Heart left ventricle (tissue), 16 donors: ENCODE measurements at regions of chr7 and their contacts with region 1.

Region 1: DNA sequence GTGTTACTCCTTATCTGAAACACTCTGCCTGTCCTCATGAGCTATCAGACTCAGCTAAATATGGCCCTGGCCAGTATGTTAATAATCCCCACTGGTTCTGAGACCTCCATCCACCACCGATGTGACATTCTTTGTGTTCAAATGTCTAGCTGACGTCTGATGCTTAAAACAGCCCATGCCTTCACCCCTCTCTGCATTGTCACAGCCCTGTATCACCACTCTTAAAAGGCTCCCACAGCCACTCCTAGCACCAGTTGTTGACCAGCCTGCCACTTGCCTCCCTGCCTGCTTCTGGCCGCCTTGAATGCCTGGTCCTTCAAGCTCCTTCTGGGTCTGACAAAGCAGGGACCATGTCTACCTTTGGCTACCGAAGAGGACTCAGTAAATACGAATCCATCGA is at the start of gene LMOD2:
- DNase-seq: peak; percentile 69 to 85 (median 79)
- ATAC-seq: peak; percentile 80 to 91 (median 86)
- H3K4me3 ChIP-seq: peak within 1 kb of the TSS; percentile 36 to 69 (median 58)
- H3K27ac ChIP-seq: peak within 1 kb of the TSS; percentile 76 to 98 (median 89)
- H3K4me1 ChIP-seq: peaks cover 0 to 20% (median 2%) of the 10 kb centered on the region in 12 donors
- H3K27me3 ChIP-seq: no peaks in the 10 kb centered on the region
- CTCF ChIP-seq: no peak
- POLR2A ChIP-seq: peak in 1 of 2 donors; percentile 92
- total RNA-seq, gene LMOD2: 348 to 1,479 (median 780) TPM

Region 2: GRCh38 chr7:123601530-123601929 is 54.1 kb before region 1 on chr7 and contains the start of gene ASB15:
- intact Hi-C with region 1: loop called in 1 of 10 experiments (anchors 5 kb)
- DNase-seq: peak in 4 of 5 donors; percentile 28 to 50 (median 38)
- ATAC-seq: peak; percentile 95 to 98 (median 95)
- H3K4me3 ChIP-seq: peak within 1 kb of the TSS; percentile 1 to 55 (median 43)
- H3K27ac ChIP-seq: peak within 1 kb of the TSS; percentile 62 to 88 (median 76)
- H3K4me1 ChIP-seq: peaks cover 0 to 8% (median 0%) of the 10 kb centered on the region in 12 donors
- H3K27me3 ChIP-seq: no peaks in the 10 kb centered on the region
- CTCF ChIP-seq: no peak
- POLR2A ChIP-seq: peak in 1 of 2 donors; percentile 65
- total RNA-seq, gene ASB15: 25.4 to 77.1 (median 45.9) TPM